ENCODE measurements at regions of chr22 and their contacts with region 1.

Region 1: GRCh38 chr22:19447388-19448075 is at the start of gene C22orf39:
- DNase-seq: peak; percentile 91
- ATAC-seq: peak; percentile 84
- H3K4me3 Mint-ChIP-seq: peak within 1 kb of the TSS; percentile 92
- H3K27ac Mint-ChIP-seq: peak within 1 kb of the TSS; percentile 96
- H3K4me1 Mint-ChIP-seq: peaks cover 16% of the 10 kb centered on the region
- H3K27me3 Mint-ChIP-seq: peaks cover 8% of the 10 kb centered on the region
- CTCF ChIP-seq: no peak
- total RNA-seq, gene C22orf39: 26.5 to 34.4 TPM (median 32.8 TPM) in 3 replicates

Region 2: GRCh38 chr22:19432133-19432851 is 15.2 kb before region 1 on chr22 and contains the start of gene MRPL40:
- CTCF ChIA-PET with region 1: no interaction called
- POLR2A ChIA-PET with region 1: interaction called, 13 read pairs
- DNase-seq: peak; percentile 83
- ATAC-seq: peak; percentile 81
- H3K4me3 Mint-ChIP-seq: peak within 1 kb of the TSS; percentile 81
- H3K27ac Mint-ChIP-seq: peak within 1 kb of the TSS; percentile 95
- H3K4me1 Mint-ChIP-seq: peaks cover 20% of the 10 kb centered on the region
- H3K27me3 Mint-ChIP-seq: no peaks in the 10 kb centered on the region
- CTCF ChIP-seq: no peak
- total RNA-seq, gene MRPL40: 15.7 to 19.2 TPM (median 18.2 TPM) in 3 replicates

Region 3: GRCh38 chr22:19473578-19473977 is 26.0 kb after region 1 on chr22:
- CTCF ChIA-PET with region 1: interaction called, 12 read pairs
- POLR2A ChIA-PET with region 1: no interaction called
- DNase-seq: no peak
- ATAC-seq: no peak; the same call in 1 of the 2 replicates
- H3K4me3 Mint-ChIP-seq: no peak overlapping the region
- H3K27ac Mint-ChIP-seq: no peak overlapping the region
- H3K4me1 Mint-ChIP-seq: peaks cover 12% of the 10 kb centered on the region
- H3K27me3 Mint-ChIP-seq: no peaks in the 10 kb centered on the region
- CTCF ChIP-seq: no peak

Region 4: GRCh38 chr22:19527861-19528417 is 80.4 kb after region 1 on chr22:
- CTCF ChIA-PET with region 1: no interaction called
- POLR2A ChIA-PET with region 1: no interaction called
- DNase-seq: no peak
- ATAC-seq: no peak
- H3K4me3 Mint-ChIP-seq: no peak overlapping the region
- H3K27ac Mint-ChIP-seq: no peak overlapping the region
- H3K4me1 Mint-ChIP-seq: peaks cover 8% of the 10 kb centered on the region
- H3K27me3 Mint-ChIP-seq: peaks cover 39% of the 10 kb centered on the region
- CTCF ChIP-seq: no peak

Measured in WTC11 (cell line).